B cell (primary cell): ENCODE measurements at regions of chr4 and their contacts with region 1.

Region 1: DNA sequence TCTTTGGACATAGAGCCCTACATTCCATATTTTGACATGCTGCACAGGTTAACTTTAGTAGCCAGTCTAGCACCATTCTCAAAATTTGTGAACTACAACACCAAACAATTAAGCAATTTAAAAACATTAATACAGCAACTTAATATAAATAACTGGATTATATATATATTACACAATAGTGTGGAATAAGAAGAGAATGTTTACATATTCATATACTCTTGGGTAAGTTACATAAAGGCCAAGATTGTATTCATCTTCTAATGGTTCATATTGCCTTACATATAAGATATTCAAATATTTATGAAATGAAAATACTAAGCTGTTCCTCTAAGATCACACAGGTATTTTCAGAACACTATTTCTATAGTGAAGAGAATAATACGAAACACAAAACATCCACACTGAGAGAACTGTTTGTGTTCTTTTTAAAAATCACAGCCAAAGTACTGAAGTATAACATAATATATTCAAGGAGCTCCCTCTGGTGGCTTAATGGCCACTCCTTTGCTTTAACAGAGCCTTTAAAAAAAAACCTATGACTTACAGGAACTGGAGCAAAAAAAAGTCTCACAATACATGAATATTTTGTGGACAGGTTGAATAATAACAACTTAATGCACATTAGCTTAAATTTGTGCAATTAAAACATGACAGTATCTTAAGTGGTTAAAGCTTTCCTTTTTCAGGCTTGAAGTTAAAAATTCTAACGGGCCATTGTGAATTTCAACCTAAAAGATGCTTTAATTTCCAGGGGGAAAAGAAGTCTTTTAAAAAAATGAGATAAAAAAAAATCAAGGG is 46.2 kb downstream of the NEK1 start:
- DNase-seq: peak; percentile 64
- ATAC-seq: peak; percentile 41
- H3K4me3 ChIP-seq: no peak overlapping the region
- H3K4me3 Mint-ChIP-seq: no peak overlapping the region
- H3K27ac ChIP-seq: no peak overlapping the region
- H3K27ac Mint-ChIP-seq: no peak overlapping the region
- H3K4me1 ChIP-seq: no peaks in the 10 kb centered on the region
- H3K4me1 Mint-ChIP-seq: peaks cover 4% of the 10 kb centered on the region
- H3K27me3 ChIP-seq: no peaks in the 10 kb centered on the region
- H3K27me3 Mint-ChIP-seq: no peaks in the 10 kb centered on the region
- CTCF ChIP-seq: peak; percentile 84

Region 2: GRCh38 chr4:168183717-168184608 is 1382.3 kb before region 1 on chr4:
- CTCF ChIA-PET with region 1: no interaction called
- POLR2A ChIA-PET with region 1: no interaction called
- intact Hi-C with region 1: loop called (anchors 10 kb)
- DNase-seq: peak; percentile 12
- ATAC-seq: no peak
- H3K4me3 ChIP-seq: no peak overlapping the region
- H3K4me3 Mint-ChIP-seq: no peak overlapping the region
- H3K27ac ChIP-seq: no peak overlapping the region
- H3K27ac Mint-ChIP-seq: no peak overlapping the region
- H3K4me1 ChIP-seq: peaks cover 0 to 3% of the 10 kb centered on the region in 2 donors
- H3K4me1 Mint-ChIP-seq: peaks cover 6% of the 10 kb centered on the region
- H3K27me3 ChIP-seq: no peaks in the 10 kb centered on the region
- H3K27me3 Mint-ChIP-seq: no peaks in the 10 kb centered on the region
- CTCF ChIP-seq: peak; percentile 52

Region 3: GRCh38 chr4:168514249-168514852 is 1051.9 kb before region 1 on chr4:
- CTCF ChIA-PET with region 1: interaction called, 9 read pairs
- POLR2A ChIA-PET with region 1: no interaction called
- intact Hi-C with region 1: loop called (anchors 10 kb)
- DNase-seq: peak; percentile 34
- ATAC-seq: no peak
- H3K4me3 ChIP-seq: no peak overlapping the region
- H3K4me3 Mint-ChIP-seq: no peak overlapping the region
- H3K27ac ChIP-seq: no peak overlapping the region
- H3K27ac Mint-ChIP-seq: no peak overlapping the region
- H3K4me1 ChIP-seq: no peaks in the 10 kb centered on the region
- H3K4me1 Mint-ChIP-seq: peaks cover 2% of the 10 kb centered on the region
- H3K27me3 ChIP-seq: no peaks in the 10 kb centered on the region
- H3K27me3 Mint-ChIP-seq: peaks cover 3% of the 10 kb centered on the region
- CTCF ChIP-seq: peak; percentile 73

Region 4: DNA sequence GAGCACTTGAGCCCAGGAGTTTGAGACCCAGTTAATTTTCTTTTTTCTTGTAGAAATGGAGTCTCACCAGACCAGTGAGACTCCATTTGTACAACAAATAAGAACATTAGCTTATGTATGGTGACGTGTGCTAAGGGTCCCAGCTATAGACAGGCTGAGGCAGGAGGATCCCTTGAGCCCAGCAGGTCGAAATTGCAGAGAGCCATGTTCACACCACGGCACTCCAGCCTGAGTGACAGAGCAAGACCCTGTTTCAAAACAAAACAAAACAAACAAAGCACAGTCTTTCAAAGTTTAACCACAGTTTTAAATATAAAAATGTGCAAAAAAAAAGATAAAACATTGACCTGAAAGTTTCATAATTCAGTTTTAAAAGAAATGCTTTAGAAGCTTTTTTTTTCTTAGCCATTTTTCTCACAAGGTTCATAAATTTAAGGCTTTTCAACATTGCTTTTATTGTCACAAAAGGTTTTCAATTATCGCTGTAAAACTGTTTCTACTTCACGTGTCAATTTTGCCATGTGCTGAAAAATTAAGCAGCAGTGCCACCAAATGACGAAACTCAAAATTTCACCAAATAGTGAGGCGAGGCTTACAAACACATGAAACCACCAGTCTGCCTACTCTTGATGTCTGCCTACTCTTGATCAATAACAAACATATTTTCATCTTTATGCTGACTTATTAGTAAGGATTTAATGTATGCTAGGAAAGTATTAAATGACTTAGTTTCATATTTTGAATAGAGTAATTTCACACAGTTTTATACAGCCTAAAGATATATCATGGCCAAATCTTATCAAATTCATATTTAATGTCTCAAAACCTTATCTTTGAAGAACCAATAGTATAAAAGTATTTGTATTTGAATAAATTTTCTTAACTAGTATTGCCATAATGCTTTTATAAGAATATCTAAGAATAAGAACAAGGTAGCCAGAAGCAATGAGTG is 80.2 kb before region 1 on chr4:
- CTCF ChIA-PET with region 1: no interaction called
- POLR2A ChIA-PET with region 1: no interaction called
- intact Hi-C with region 1: loop called (anchors 1 kb)
- DNase-seq: peak; percentile 57
- ATAC-seq: peak; percentile 43
- H3K4me3 ChIP-seq: no peak overlapping the region
- H3K4me3 Mint-ChIP-seq: no peak overlapping the region
- H3K27ac ChIP-seq: no peak overlapping the region
- H3K27ac Mint-ChIP-seq: no peak overlapping the region
- H3K4me1 ChIP-seq: no peaks in the 10 kb centered on the region
- H3K4me1 Mint-ChIP-seq: no peaks in the 10 kb centered on the region
- H3K27me3 ChIP-seq: no peaks in the 10 kb centered on the region
- H3K27me3 Mint-ChIP-seq: no peaks in the 10 kb centered on the region
- CTCF ChIP-seq: peak; percentile 74

Region 5: GRCh38 chr4:169582205-169582604 is 16.0 kb after region 1 on chr4:
- CTCF ChIA-PET with region 1: interaction called, 19 read pairs
- POLR2A ChIA-PET with region 1: no interaction called
- intact Hi-C with region 1: no loop called
- DNase-seq: no peak
- ATAC-seq: no peak
- H3K4me3 ChIP-seq: no peak overlapping the region
- H3K4me3 Mint-ChIP-seq: no peak overlapping the region
- H3K27ac ChIP-seq: no peak overlapping the region
- H3K27ac Mint-ChIP-seq: no peak overlapping the region
- H3K4me1 ChIP-seq: no peaks in the 10 kb centered on the region
- H3K4me1 Mint-ChIP-seq: no peaks in the 10 kb centered on the region
- H3K27me3 ChIP-seq: no peaks in the 10 kb centered on the region
- H3K27me3 Mint-ChIP-seq: no peaks in the 10 kb centered on the region
- CTCF ChIP-seq: no peak

Region 6: DNA sequence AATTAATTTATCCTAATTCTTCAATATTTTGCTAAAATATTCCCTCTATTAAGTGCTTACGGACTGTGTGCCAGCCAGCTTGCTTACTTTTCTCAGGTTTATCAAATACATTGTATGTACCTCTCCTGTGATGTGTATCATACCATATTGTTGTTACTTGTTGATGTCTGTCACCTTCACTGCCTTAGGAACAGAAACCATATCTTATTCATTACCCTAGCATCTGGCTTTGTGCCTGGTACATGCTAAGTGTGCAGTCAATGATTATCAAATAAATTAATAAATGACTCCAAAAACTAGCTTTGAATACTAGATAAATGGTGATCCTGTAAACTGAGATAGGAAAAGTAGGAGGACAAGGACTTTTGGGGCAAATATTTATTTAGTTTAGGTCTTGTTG is 61.1 kb after region 1 on chr4:
- CTCF ChIA-PET with region 1: no interaction called
- POLR2A ChIA-PET with region 1: no interaction called
- intact Hi-C with region 1: no loop called
- DNase-seq: no peak
- ATAC-seq: no peak
- H3K4me3 ChIP-seq: no peak overlapping the region
- H3K4me3 Mint-ChIP-seq: no peak overlapping the region
- H3K27ac ChIP-seq: no peak overlapping the region
- H3K27ac Mint-ChIP-seq: no peak overlapping the region
- H3K4me1 ChIP-seq: peaks cover 0 to 7% of the 10 kb centered on the region in 2 donors
- H3K4me1 Mint-ChIP-seq: peaks cover 36% of the 10 kb centered on the region
- H3K27me3 ChIP-seq: no peaks in the 10 kb centered on the region
- H3K27me3 Mint-ChIP-seq: no peaks in the 10 kb centered on the region
- CTCF ChIP-seq: no peak

Region 7: DNA sequence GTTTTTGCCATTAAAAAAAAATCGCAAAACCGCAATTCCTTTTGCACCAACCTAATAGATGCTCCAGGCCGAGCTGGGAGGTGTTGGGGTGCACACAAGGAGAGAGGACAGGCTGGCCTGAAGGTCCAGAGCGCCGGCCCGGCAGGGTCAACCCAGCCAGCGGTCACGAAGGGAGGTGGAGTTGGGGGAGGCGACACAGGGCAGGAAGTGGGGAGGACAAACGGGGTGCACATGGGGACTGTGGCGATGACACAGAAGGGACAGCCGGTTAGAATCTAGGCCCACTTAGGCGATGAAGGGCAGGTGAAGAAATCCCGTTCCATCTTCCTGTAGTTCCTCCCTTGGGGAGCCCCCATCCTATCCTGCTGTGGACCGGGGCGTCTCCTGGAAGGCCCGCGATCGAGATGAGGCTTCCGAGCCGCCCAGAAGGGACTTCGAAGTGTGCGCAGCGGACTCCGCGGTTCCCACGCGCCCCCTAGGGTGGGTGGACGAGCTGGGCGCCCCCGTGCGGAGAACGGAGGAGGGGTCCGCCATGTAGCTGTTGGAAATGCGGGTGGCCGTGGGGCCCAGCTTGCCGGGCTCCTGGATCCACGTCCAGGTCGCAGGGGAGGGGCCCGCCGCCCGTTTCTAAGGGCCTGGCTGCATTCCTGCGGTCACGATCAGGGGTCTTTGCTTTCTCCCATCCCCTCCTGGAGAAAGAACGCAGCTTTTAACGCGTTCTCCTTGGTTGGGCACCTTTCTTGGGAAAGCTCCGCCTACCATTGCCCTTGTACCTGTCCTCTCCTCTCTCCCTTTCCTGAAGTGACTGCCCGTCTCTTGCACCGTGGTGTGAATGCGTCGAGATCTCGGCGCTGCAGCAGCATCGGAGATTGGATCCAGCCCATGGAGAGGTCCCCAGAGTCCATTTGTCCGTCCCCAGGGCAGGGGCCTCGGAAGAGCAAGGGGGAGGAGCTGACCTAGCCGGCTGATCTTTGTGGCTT is 208.5 kb after region 1 on chr4:
- CTCF ChIA-PET with region 1: no interaction called
- POLR2A ChIA-PET with region 1: no interaction called
- intact Hi-C with region 1: no loop called
- DNase-seq: peak; percentile 56
- ATAC-seq: peak; percentile 67
- H3K4me3 ChIP-seq: peak overlapping the region in 3 of 5 experiments; percentile 9 to 35 (median 33)
- H3K4me3 Mint-ChIP-seq: peak overlapping the region; percentile 49
- H3K27ac ChIP-seq: no peak overlapping the region
- H3K27ac Mint-ChIP-seq: no peak overlapping the region
- H3K4me1 ChIP-seq: peaks cover 8 to 10% of the 10 kb centered on the region in 2 donors
- H3K4me1 Mint-ChIP-seq: peaks cover 6% of the 10 kb centered on the region
- H3K27me3 ChIP-seq: peaks cover 0 to 24% (median 16%) of the 10 kb centered on the region in 4 experiments
- H3K27me3 Mint-ChIP-seq: peaks cover 30% of the 10 kb centered on the region
- CTCF ChIP-seq: peak; percentile 28

Region 8: DNA sequence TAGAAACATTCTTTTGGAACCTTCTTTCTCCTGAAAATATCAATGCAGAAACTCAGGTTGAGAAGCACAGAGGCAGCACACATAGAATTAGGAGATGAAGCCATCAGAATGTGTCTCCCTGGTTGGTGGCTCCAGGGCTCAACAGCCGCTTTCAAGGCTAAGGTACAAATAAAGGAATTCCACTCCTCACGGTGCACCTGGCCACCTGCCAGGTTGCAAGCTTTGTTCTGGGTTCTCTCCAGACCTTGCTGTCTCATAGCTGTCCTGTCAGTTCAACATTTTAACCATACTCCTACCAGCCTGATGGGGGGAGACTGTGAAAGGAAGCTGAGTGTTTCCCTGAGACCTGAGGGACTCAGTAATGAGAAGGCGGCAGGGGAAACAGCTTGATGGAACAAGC is 287.9 kb after region 1 on chr4:
- CTCF ChIA-PET with region 1: no interaction called
- POLR2A ChIA-PET with region 1: no interaction called
- intact Hi-C with region 1: no loop called
- DNase-seq: no peak
- ATAC-seq: no peak
- H3K4me3 ChIP-seq: no peak overlapping the region
- H3K4me3 Mint-ChIP-seq: no peak overlapping the region
- H3K27ac ChIP-seq: no peak overlapping the region
- H3K27ac Mint-ChIP-seq: no peak overlapping the region
- H3K4me1 ChIP-seq: no peaks in the 10 kb centered on the region
- H3K4me1 Mint-ChIP-seq: no peaks in the 10 kb centered on the region
- H3K27me3 ChIP-seq: no peaks in the 10 kb centered on the region
- H3K27me3 Mint-ChIP-seq: peaks cover 17% of the 10 kb centered on the region
- CTCF ChIP-seq: no peak